ENCODE measurements at regions of chr2 and their contacts with region 1.

Region 1: GRCh38 chr2:74876081-74876886 is 42.4 kb downstream of the HK2 start:
- DNase-seq: no peak
- H3K4me3 ChIP-seq: no peak overlapping the region
- H3K27me3 ChIP-seq: no peaks in the 10 kb centered on the region
- CTCF ChIP-seq: peak; percentile 58

Region 2: DNA sequence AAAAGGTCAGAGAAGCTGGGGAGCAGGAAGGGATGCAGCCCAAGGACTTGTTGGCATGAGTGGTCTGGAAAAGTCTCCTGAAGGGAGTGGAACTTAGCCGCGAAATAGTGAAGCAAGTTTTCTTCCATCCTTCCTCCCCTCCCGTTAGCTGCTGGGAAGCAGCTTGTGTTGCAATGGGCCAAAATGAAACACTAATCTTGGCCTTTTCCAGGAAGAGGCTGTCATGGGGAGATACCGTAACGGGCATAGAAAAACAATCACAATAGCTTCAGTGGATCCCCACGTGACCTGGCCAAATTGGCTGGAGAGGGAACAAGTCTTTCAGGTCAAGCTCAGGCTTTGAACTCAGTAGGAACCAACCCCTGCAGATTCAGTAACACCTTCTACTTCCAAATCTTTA is 172.9 kb before region 1 on chr2:
- CTCF ChIA-PET with region 1: interaction called, 28 read pairs
- POLR2A ChIA-PET with region 1: no interaction called
- DNase-seq: no peak
- H3K4me3 ChIP-seq: no peak overlapping the region
- H3K27me3 ChIP-seq: peaks cover 3% of the 10 kb centered on the region
- CTCF ChIP-seq: no peak

Region 3: GRCh38 chr2:74740389-74741075 is 135.8 kb before region 1 on chr2:
- CTCF ChIA-PET with region 1: interaction called, 21 read pairs
- POLR2A ChIA-PET with region 1: no interaction called
- DNase-seq: peak; percentile 95
- H3K4me3 ChIP-seq: no peak overlapping the region
- H3K27me3 ChIP-seq: no peaks in the 10 kb centered on the region
- CTCF ChIP-seq: 0 out of 2 replicates have a peak, but pooled peaks have one; percentile 3

Region 4: GRCh38 chr2:74833418-74834233 is 42.7 kb before region 1 on chr2 and contains the start of gene HK2:
- CTCF ChIA-PET with region 1: interaction called, 31 read pairs
- POLR2A ChIA-PET with region 1: no interaction called
- DNase-seq: no peak
- H3K4me3 ChIP-seq: peak within 1 kb of the TSS; percentile 95
- H3K27me3 ChIP-seq: no peaks in the 10 kb centered on the region
- CTCF ChIP-seq: no peak
- polyA plus RNA-seq, gene HK2: 21.8 and 23.8 TPM in 2 replicates